Activated CD8-positive, alpha-beta memory T cell treated with anti-CD3 and anti-CD28 coated beads, Interleukin-2, amount 10 ng/mL, durations not matched to agents 7 days and 5 days (primary cell): ENCODE measurements at regions of chr3 and their contacts with region 1.

Region 1: GRCh38 chr3:69051756-69052471 is at the start of gene TMF1:
- DNase-seq: peak; percentile 99
- ATAC-seq: peak; percentile 95
- H3K4me3 Mint-ChIP-seq: peak within 1 kb of the TSS; percentile 94
- H3K27ac Mint-ChIP-seq: peak within 1 kb of the TSS; percentile 95
- H3K4me1 Mint-ChIP-seq: peaks cover 49% of the 10 kb centered on the region
- H3K27me3 Mint-ChIP-seq: no peaks in the 10 kb centered on the region
- total RNA-seq, gene TMF1: 47.5 to 49.5 TPM

Region 2: GRCh38 chr3:68424796-68425460 is 627.0 kb before region 1 on chr3:
- CTCF ChIA-PET with region 1: no interaction called
- DNase-seq: no peak
- ATAC-seq: no peak
- H3K4me3 Mint-ChIP-seq: no peak overlapping the region
- H3K27ac Mint-ChIP-seq: no peak overlapping the region
- H3K4me1 Mint-ChIP-seq: no peaks in the 10 kb centered on the region
- H3K27me3 Mint-ChIP-seq: no peaks in the 10 kb centered on the region

Region 3: DNA sequence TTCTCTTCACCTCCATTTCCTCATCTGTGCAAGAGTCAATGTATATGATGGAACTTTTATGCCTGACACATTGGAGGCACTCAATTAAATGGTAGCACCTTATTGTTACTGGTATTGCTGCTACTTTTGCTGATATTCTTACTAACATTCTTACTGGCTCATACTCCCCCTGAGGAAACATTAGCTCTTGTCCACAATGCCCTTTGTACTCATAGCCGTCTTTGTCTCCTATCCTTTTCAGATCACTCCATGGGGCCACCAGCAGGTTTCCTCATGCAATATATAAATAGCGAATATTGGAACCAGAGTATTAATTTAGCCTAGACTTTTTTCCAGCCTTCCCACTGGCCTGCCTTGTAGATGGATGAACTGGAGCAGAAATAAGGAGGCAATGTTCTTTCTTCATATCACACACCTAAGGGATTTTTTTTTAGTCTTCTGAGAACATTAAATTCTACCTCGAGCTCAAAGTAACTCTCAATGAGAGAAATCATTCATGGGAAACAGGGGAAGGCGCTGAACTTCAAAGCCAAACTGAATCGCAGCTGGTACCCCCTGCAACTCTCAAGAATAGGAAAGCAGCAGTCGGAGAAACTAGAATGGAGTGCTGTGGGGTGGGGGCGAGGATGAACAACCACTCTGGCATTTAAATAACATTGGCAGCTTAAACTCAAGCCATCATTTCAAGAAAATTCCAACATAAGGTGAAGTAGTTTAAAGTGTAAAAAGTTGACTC is 419.9 kb before region 1 on chr3:
- CTCF ChIA-PET with region 1: no interaction called
- DNase-seq: no peak
- ATAC-seq: no peak
- H3K4me3 Mint-ChIP-seq: no peak overlapping the region
- H3K27ac Mint-ChIP-seq: no peak overlapping the region
- H3K4me1 Mint-ChIP-seq: no peaks in the 10 kb centered on the region
- H3K27me3 Mint-ChIP-seq: no peaks in the 10 kb centered on the region

Region 4: GRCh38 chr3:68743521-68743920 is 308.4 kb before region 1 on chr3:
- CTCF ChIA-PET with region 1: no interaction called
- DNase-seq: no peak
- ATAC-seq: no peak
- H3K4me3 Mint-ChIP-seq: no peak overlapping the region
- H3K27ac Mint-ChIP-seq: no peak overlapping the region
- H3K4me1 Mint-ChIP-seq: no peaks in the 10 kb centered on the region
- H3K27me3 Mint-ChIP-seq: no peaks in the 10 kb centered on the region

Region 5: DNA sequence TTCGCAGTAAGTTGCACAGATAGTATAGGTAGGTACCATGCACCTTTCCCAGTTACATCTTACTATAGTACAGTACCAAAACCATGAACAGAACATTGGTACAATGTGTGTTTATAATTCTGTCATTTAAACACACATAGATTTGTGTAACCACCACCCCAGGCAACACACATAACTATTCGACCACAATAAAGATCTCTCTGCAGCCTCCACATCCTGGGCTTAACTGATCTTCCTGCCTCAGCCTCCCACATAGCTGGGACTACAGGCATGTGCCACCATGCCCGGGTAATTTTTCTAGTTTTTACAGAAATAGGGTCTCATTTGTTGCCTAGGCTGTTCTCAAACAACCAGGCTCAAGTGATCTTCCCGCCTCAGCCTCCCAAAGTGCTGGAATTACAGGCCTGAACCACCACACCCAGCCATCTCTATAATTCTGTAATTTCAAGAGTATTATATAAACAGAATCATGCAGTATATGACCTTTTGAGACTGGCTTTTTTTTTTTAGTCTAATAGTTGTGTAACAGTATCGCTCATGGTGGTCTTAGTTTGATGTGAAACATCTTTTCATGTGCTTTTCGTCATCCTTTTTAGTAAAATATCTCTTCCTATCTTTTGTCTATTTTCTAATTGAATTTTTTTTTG is 13.5 kb after region 1 on chr3:
- CTCF ChIA-PET with region 1: interaction called, 13 read pairs
- DNase-seq: peak; percentile 64
- ATAC-seq: peak; percentile 77
- H3K4me3 Mint-ChIP-seq: peak overlapping the region; percentile 37
- H3K27ac Mint-ChIP-seq: peak overlapping the region; percentile 86
- H3K4me1 Mint-ChIP-seq: peaks cover 62% of the 10 kb centered on the region
- H3K27me3 Mint-ChIP-seq: no peaks in the 10 kb centered on the region

Region 6: DNA sequence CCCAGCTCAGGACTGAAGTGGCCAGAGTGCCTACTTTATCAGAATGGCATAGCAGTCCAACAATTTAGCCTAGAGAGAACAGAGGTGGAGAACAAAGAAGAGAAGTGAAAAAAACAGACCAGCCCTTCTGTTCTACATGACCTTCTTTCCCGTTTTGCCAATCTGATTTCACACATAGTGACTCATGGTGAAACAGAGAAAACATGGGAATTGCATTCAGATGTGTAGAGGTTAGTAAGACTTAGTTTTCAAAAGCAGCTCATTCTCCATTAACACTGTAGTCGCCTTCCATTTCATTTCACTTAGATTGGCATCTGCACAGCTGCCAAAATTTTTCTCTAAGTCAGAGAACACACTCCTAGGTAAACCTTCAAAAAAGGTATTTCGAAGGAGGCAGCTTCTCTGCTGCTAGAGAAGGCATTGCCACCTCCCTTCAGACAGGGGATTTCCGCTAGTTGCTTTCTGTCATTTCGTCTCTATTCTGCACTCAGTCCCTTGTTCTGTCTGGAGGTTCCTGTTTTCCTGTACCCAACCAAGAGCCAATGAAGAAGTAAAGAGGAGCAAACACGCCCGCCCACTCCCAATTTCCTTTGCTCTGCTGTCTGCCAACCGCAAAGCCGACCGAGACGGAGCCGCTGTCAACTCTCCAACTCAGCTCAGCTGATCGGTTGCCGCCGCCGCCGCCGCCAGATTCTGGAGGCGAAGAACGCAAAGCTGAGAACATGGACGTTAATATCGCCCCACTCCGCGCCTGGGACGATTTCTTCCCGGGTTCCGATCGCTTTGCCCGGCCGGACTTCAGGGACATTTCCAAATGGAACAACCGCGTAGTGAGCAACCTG is 32.6 kb after region 1 on chr3 and contains the start of gene ARL6IP5:
- CTCF ChIA-PET with region 1: interaction called, 49 read pairs
- DNase-seq: peak; percentile 97
- ATAC-seq: peak; percentile 59
- H3K4me3 Mint-ChIP-seq: peak within 1 kb of the TSS; percentile 97
- H3K27ac Mint-ChIP-seq: peak within 1 kb of the TSS; percentile 94
- H3K4me1 Mint-ChIP-seq: peaks cover 55% of the 10 kb centered on the region
- H3K27me3 Mint-ChIP-seq: no peaks in the 10 kb centered on the region
- total RNA-seq, gene ARL6IP5: 132 to 203 TPM

Region 7: DNA sequence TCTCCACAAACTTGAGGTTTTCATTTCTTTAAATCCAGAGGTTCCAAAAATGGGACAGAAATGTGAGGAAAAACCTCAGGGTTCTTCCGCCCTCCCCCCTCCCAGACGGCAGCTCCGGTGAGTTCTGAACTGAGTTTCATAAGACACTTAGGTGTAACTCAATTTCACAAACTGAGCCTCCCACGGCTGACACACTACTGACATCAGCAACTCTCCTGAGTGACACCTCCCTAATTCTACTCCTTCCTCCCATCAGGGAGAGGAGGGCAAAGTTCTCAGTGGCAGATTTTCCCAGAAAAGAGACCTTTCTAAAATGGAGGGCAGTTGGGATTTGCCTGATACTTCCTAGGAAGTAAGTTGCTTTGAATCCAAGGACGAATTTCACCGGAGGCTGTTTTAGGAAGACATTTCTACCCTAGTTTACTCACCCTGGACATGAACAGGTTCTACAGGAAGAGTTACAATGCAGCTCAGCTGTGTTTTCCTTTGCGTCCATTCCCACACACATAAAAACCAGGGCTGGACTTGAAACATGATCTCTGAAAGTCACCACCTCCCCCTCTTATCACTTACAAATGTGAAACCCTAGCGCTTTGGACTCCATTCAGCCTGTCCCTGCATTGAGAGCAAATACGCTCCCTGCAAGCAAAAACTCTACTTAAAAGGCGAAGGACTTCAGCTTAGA is 148.6 kb after region 1 on chr3:
- CTCF ChIA-PET with region 1: no interaction called
- DNase-seq: peak; percentile 81
- ATAC-seq: peak; percentile 40
- H3K4me3 Mint-ChIP-seq: peak overlapping the region; percentile 98
- H3K27ac Mint-ChIP-seq: peak overlapping the region; percentile 96
- H3K4me1 Mint-ChIP-seq: peaks cover 75% of the 10 kb centered on the region
- H3K27me3 Mint-ChIP-seq: no peaks in the 10 kb centered on the region